ENCODE measurements at regions of chr16 and their contacts with region 1.

Region 1: DNA sequence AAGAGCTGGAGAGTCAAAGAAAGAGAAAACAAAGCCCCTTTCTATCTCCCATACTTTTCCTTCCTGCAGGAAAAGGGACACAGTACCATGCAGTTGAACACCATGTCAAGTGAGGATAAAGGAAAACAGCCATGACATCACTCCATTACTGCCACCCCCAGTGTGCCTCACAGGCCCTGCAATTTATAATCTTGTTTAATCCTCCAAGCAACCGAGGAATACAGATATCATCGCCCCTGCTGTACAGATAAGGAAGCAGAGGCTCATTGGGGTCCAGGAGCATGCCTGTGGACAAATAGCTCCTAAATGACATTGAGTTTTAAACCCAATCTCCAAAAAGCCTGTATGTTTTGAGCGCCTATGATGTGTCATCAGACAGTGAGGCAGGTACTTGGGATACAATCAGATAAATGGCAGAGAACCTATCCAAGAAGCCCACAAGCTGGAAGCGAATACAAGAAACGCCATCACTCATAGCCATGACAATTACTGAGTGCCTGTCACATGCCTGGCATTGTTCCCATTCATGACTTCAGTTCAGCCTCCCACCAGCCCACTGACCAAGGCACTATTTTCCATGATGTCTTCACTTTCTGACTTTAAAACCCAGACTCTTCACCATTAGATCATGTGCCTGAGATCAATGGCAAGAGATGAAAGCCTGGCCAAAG is 45.5 kb downstream of the CPPED1 start:
- DNase-seq: no peak
- ATAC-seq: no peak
- H3K4me3 ChIP-seq: no peak overlapping the region
- H3K27ac ChIP-seq: no peak overlapping the region
- H3K4me1 ChIP-seq: peaks cover 58% of the 10 kb centered on the region
- H3K27me3 ChIP-seq: no peaks in the 10 kb centered on the region
- CTCF ChIP-seq: no peak
- EP300 ChIP-seq: no peak
- POLR2A ChIP-seq: no peak
- RAD21 ChIP-seq: no peak

Region 2: DNA sequence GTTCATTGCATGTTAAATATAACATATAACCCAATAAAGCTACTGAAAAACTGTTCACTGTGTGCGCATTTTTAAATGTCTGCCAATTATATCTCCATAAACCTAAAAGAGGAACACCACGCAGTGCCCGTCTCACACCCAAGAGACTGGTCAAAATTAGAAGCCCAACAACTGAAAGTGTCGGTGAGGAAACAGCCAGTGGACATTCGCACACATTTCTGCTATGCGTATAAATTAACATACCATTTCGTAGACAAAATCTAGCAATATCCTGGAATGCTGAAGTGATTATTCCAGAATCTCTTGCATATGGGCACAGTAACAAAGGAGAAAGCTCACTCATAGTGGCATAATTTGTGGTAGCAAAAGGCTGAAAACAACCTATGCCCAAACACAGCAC is 10.3 kb before region 1 on chr16:
- CTCF ChIA-PET with region 1: no interaction called
- POLR2A ChIA-PET with region 1: no interaction called
- in situ Hi-C with region 1: no loop called
- intact Hi-C with region 1: no loop called
- DNase-seq: no peak
- ATAC-seq: no peak
- H3K4me3 ChIP-seq: no peak overlapping the region
- H3K27ac ChIP-seq: no peak overlapping the region
- H3K4me1 ChIP-seq: peaks cover 5% of the 10 kb centered on the region
- H3K27me3 ChIP-seq: no peaks in the 10 kb centered on the region
- CTCF ChIP-seq: no peak
- EP300 ChIP-seq: no peak
- POLR2A ChIP-seq: no peak
- RAD21 ChIP-seq: no peak

Region 3: DNA sequence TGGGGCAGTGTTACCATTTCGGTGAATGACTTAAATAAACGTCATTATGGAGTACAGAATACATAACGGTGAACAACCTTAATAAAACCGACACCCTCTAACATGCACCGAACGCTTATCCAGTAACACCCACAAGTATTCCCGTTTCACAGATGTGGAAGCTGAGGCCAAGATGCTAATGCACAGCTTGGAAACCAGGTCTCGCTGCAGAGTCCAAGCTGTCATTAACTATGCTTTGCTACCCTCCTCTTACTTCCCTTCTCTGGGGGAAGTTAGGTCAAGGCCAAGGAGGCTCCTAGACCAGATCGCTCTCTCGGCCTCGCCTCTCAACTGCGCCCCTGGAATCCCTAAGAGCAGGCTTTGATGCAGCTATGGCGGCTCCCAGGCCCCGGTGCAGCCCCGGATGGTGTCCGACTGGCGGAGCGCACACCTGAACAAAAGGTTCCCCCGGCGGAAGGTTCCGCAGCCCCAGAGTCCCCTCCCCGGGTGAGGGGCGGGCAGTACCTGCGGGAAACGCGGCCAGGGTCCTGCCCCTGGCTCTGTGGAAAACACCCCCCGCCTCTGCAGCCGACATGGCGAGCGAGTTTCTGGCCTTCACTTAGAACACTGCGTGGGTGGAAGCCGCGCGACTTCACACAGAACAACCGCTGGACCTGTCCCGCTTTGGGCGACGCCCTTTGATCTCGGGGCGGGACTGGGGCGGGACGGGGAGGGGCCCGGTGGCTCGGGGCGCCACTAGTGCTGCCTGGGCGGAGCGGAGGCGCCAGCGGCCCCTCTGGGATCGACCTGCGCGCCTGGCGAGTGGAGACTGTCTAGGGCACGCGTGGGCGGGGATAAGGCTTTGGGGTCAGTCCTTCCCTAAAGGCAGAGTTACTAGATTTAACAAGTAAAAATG is 45.3 kb after region 1 on chr16 and contains the start of gene CPPED1:
- CTCF ChIA-PET with region 1: no interaction called
- POLR2A ChIA-PET with region 1: interaction called, 21 read pairs
- in situ Hi-C with region 1: no loop called
- intact Hi-C with region 1: no loop called
- DNase-seq: peak; percentile 93
- ATAC-seq: peak; percentile 92
- H3K4me3 ChIP-seq: peak within 1 kb of the TSS; percentile 86 to 97 (median 87)
- H3K27ac ChIP-seq: peak within 1 kb of the TSS; percentile 97
- H3K4me1 ChIP-seq: peaks cover 58% of the 10 kb centered on the region
- H3K27me3 ChIP-seq: peaks cover 0 to 7% of the 10 kb centered on the region in 2 experiments; a peak in 1 of 5 replicates
- CTCF ChIP-seq: peak; percentile 45
- EP300 ChIP-seq: peak in 1 of 2 experiments; percentile 89
- POLR2A ChIP-seq: peak; percentile 94 to 97
- RAD21 ChIP-seq: peak; percentile 78
- total RNA-seq, gene CPPED1: 66.6 and 118 TPM in 2 replicates

Measured in HepG2 (cell line).